HEK293 (cell line): ENCODE measurements at regions of chr6 and their contacts with region 1.

Region 1: GRCh38 chr6:2848851-2849250 is 7.2 kb upstream of the SERPINB1 start:
- H3K4me3 ChIP-seq: no peak overlapping the region
- H3K27ac ChIP-seq: no peak overlapping the region
- H3K4me1 ChIP-seq: peaks cover 6% of the 10 kb centered on the region; the same call in 1 of the 2 replicates
- CTCF ChIP-seq: no peak

Region 2: DNA sequence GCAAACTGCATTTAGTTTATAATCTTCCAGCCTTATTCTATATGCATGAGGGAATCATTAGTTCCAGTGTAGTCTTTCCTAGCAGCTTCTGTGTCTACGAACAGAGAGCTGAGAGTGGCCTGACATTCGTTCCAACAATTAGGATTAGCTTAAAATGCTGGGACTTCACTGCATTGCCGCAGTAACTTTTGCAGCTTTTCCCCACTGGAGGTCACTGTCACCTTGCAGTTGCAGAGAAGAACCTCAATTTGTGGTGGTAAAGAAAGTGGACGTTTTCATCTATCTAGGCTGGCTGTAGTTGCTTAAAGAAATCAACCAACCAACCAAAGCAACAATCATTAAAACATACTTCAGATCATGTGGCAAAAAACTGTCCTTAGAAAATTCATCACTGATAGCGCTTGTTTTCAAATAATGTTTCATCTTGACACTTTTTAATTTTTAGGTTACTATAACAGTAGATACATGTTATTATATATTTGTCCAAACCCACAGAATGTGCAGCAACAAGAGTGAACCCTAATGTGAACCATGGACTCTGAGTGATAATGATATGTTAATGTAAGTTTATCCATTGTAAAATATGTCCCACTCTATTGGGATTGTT is 110.4 kb before region 1 on chr6:
- CTCF ChIA-PET with region 1: interaction called, 18 read pairs
- POLR2A ChIA-PET with region 1: no interaction called
- H3K4me3 ChIP-seq: no peak overlapping the region
- H3K27ac ChIP-seq: no peak overlapping the region
- H3K4me1 ChIP-seq: no peaks in the 10 kb centered on the region
- CTCF ChIP-seq: peak; percentile 82

Region 3: DNA sequence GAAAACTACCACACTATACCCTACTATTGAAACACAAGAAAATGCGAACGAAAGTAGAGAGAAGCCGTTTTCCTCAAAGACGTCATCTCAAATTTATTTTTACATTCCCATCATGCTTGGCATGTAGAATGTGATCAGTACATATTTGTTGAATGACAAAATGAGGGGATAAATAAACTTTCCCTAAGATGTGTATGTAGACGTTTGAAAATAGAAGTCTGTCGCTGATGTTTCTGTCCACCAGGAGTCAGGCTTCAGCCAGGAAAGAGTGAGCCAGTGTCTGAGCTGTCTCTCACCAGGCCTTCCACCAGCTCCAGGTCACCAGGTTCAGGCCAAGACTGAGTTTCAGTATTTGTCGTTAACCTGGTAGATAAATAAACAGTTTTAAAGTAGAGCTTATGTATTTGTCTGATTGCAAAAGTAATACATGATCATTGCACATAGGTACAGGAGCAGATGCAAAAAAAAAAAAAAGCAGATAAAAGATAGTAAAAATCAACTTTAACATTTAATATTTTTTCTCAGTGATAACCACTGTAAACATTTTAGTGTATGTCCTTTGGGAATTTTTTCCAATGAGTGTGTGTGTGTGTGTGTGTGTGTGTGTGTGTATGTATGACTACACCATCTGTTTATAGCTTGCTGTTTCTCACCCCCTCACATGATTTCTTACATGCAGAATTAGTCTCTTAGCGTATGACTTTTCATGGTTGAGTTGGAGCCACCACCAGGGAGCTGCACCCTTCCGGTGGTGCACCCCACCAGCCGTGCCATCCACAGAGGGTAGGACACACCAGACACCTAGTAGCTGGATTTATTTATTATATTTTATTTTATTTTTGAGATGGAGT is 57.5 kb before region 1 on chr6:
- CTCF ChIA-PET with region 1: interaction called, 118 read pairs
- POLR2A ChIA-PET with region 1: interaction called, 3 read pairs
- H3K4me3 ChIP-seq: no peak overlapping the region
- H3K27ac ChIP-seq: no peak overlapping the region
- H3K4me1 ChIP-seq: no peaks in the 10 kb centered on the region
- CTCF ChIP-seq: peak; percentile 59; the same call in 1 of the 2 replicates

Region 4: GRCh38 chr6:2911171-2911570 is 62.3 kb after region 1 on chr6:
- CTCF ChIA-PET with region 1: interaction called, 27 read pairs
- POLR2A ChIA-PET with region 1: no interaction called
- H3K4me3 ChIP-seq: no peak overlapping the region
- H3K27ac ChIP-seq: no peak overlapping the region
- H3K4me1 ChIP-seq: no peaks in the 10 kb centered on the region
- CTCF ChIP-seq: no peak

Region 5: DNA sequence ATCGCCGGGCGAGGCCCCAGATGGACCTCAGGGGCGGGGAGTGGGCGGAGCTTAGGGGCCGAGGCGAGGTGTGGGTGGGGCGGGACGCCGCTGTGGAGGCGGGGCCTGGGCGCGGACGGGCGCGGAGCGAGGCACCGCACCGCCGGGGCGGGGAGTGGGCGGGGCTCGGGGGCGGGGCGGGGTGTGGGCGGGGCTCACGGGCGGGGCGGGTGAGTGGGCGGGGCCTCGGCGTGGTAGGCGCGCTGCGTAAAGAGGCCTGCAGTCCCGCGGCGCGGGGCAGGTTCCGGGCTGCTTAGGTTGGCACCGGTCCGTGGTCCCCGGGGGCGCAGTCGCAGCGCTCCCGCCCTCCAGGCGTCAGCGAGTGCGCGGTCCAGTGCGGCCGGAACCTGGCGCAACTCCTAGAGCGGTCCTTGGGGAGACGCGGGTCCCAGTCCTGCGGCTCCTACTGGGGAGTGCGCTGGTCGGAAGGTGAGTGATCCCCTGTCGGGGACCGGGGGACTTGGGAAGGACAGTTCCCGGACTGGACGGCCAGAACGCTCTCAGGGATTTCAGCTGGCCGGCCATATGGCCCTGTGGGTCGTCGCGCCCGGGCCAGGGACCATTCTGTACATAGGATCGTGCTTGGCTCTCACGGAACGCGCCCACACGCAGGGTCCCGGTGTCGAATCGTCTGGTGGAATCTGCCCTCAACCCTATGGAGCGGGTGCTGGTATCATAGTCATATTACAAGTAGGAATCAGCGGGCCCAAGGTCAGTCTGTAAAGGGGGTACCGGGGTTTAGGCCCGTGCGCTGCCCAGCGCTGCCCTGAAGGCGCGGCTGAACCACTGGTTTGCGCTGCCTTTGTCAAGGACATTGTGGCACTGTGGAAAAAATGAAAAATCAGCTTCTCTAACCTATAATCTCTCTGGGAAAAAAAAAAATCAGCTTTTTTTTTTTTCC is 151.0 kb after region 1 on chr6 and contains the start of gene NQO2:
- CTCF ChIA-PET with region 1: interaction called, 16 read pairs
- POLR2A ChIA-PET with region 1: interaction called, 4 read pairs
- H3K4me3 ChIP-seq: peak within 1 kb of the TSS; percentile 79
- H3K27ac ChIP-seq: peak within 1 kb of the TSS; percentile 63; the same call in 1 of the 2 replicates
- H3K4me1 ChIP-seq: no peaks in the 10 kb centered on the region
- CTCF ChIP-seq: peak; percentile 70